GM12878 (cell line): ENCODE measurements at regions of chr2 and their contacts with region 1.

Region 1: GRCh38 chr2:168490015-168490874 is 34.2 kb downstream of the CERS6 start:
- DNase-seq: peak; percentile 92
- ATAC-seq: peak; percentile 95
- H3K4me3 ChIP-seq: peak overlapping the region; percentile 64
- H3K27ac ChIP-seq: peak overlapping the region; percentile 99
- H3K4me1 ChIP-seq: peaks cover 25% of the 10 kb centered on the region
- H3K27me3 ChIP-seq: no peaks in the 10 kb centered on the region
- CTCF ChIP-seq: no peak
- EP300 ChIP-seq: peak; percentile 85 to 87; a peak in 3 of 4 replicates
- POLR2A ChIP-seq: peak; percentile 42
- RAD21 ChIP-seq: peak; percentile 41; the same call in 1 of the 2 replicates

Region 2: DNA sequence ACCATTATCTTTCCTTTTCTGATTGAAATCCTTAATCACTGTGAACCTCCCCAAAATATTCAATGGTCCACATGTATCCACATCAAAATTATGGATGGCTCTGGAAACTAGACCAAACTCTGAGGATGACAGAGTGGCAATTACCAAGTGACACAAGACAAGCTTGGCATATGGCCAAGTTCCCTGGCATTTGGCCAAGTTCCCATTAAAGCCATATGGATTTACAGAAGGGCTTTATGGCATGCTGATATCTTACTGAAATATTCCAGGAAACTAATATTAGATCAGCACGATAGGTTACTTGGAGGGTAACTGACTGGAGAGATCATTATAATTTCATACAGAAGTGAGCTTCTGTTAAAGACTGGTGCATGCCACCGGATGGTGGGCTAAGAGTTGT is 56.1 kb before region 1 on chr2:
- CTCF ChIA-PET with region 1: no interaction called
- POLR2A ChIA-PET with region 1: no interaction called
- RAD21 ChIA-PET with region 1: no interaction called
- SMC1A ChIA-PET with region 1: interaction called, 4 read pairs
- in situ Hi-C with region 1: no loop called
- intact Hi-C with region 1: loop called (anchors 2 kb)
- DNase-seq: no peak
- ATAC-seq: no peak
- H3K4me3 ChIP-seq: no peak overlapping the region
- H3K27ac ChIP-seq: no peak overlapping the region
- H3K4me1 ChIP-seq: peaks cover 13% of the 10 kb centered on the region; the same call in 1 of the 2 replicates
- H3K27me3 ChIP-seq: no peaks in the 10 kb centered on the region
- CTCF ChIP-seq: no peak
- EP300 ChIP-seq: no peak
- POLR2A ChIP-seq: no peak
- RAD21 ChIP-seq: no peak

Region 3: DNA sequence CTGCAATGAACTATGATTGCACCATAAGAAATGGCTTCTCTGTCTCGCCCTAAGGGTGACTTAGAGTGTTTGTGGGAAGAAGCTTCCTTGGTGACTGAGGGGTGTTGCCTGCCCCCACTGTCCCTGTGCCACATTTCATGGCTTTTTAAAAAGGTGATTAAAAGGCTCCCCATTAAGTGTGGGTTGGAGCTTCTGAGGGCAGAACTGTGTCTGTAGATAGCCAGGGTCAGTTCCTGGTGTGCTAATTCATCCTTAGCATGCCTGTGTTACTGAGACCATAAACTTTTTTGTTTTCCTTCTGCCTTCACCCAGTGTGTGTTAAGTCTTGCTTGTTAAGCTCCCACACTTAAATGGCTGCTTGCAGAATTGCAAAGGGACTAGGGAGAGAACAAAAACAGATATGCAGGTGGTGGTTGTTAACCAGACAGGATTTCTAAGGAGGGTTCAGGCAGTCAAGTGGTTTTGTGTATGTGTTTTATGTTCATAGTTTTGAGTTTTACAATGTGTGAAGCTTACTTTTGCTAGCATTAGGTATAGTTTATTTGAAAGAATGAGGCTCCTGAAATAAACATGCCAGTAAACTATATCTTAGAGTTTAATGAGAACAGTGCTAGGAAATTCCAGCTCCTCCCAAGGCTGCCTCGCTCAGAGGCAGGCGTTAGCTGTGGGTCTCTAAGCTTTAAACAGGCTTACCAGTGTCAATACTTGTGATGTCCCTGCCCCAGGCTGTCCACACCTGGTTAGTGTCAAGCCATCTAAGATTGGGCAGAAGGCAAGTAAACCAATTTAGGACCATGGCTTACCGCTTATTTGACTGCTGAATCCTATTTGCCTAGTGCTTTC is 19.7 kb before region 1 on chr2:
- CTCF ChIA-PET with region 1: interaction called, 4 read pairs
- POLR2A ChIA-PET with region 1: interaction called, 4 read pairs
- RAD21 ChIA-PET with region 1: interaction called, 17 read pairs
- SMC1A ChIA-PET with region 1: interaction called, 18 read pairs
- in situ Hi-C with region 1: no loop called
- intact Hi-C with region 1: loop called (anchors 1 kb)
- DNase-seq: no peak
- ATAC-seq: peak; percentile 47
- H3K4me3 ChIP-seq: peak overlapping the region; percentile 8; the same call in 1 of the 2 replicates
- H3K27ac ChIP-seq: peak overlapping the region; percentile 71
- H3K4me1 ChIP-seq: peaks cover 52% of the 10 kb centered on the region
- H3K27me3 ChIP-seq: no peaks in the 10 kb centered on the region
- CTCF ChIP-seq: no peak
- EP300 ChIP-seq: no peak
- POLR2A ChIP-seq: no peak
- RAD21 ChIP-seq: no peak

Region 4: DNA sequence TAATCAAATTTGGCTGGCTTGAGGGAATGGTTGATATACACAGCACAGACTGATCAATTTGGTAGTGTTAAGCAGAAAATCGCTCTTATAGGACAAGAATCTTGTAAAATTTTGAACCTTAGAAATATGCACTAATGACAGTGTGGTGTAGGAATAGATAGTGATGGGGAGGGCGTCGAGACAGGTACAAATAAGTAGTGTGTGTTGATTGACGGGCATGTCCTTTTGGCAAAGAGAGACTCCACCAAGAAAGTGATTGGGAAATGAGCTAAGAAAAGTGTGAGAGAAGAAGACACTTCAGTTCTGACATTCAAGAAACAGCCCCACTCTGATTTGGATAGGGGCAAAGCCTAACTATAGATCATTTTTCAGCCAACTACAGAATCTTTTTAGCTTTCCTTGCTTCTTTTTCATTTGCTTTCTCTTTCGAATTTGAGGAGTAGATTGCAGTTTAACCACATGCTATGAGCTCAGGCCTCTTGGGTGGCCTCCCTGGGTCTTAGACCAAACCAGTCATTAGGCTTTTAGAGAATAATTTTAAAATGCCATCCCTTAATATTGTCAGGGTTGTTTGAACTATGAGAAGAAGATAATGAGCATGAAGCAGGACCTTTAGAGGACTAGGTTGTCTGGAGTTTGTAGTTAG is 92.9 kb after region 1 on chr2:
- CTCF ChIA-PET with region 1: no interaction called
- POLR2A ChIA-PET with region 1: no interaction called
- RAD21 ChIA-PET with region 1: no interaction called
- SMC1A ChIA-PET with region 1: no interaction called
- in situ Hi-C with region 1: no loop called
- intact Hi-C with region 1: loop called (anchors 5 kb)
- DNase-seq: no peak
- ATAC-seq: peak; percentile 69
- H3K4me3 ChIP-seq: no peak overlapping the region
- H3K27ac ChIP-seq: peak overlapping the region; percentile 75
- H3K4me1 ChIP-seq: peaks cover 52% of the 10 kb centered on the region
- H3K27me3 ChIP-seq: no peaks in the 10 kb centered on the region
- CTCF ChIP-seq: no peak
- EP300 ChIP-seq: no peak
- POLR2A ChIP-seq: no peak
- RAD21 ChIP-seq: no peak